Cardiac septum (tissue), 1 donor: ENCODE measurements at regions of chr1 and their contacts with region 1.

Region 1: GRCh38 chr1:29181413-29182225 is at the start of gene SRSF4:
- DNase-seq: peak; percentile 100
- total RNA-seq, gene SRSF4: 54.8 TPM

Region 2: GRCh38 chr1:28642847-28643635 is 538.6 kb before region 1 on chr1 and contains the start of gene TAF12:
- intact Hi-C with region 1: loop called (anchors 5 kb)
- DNase-seq: peak; percentile 95
- total RNA-seq, gene TAF12: 17.3 TPM

Region 3: DNA sequence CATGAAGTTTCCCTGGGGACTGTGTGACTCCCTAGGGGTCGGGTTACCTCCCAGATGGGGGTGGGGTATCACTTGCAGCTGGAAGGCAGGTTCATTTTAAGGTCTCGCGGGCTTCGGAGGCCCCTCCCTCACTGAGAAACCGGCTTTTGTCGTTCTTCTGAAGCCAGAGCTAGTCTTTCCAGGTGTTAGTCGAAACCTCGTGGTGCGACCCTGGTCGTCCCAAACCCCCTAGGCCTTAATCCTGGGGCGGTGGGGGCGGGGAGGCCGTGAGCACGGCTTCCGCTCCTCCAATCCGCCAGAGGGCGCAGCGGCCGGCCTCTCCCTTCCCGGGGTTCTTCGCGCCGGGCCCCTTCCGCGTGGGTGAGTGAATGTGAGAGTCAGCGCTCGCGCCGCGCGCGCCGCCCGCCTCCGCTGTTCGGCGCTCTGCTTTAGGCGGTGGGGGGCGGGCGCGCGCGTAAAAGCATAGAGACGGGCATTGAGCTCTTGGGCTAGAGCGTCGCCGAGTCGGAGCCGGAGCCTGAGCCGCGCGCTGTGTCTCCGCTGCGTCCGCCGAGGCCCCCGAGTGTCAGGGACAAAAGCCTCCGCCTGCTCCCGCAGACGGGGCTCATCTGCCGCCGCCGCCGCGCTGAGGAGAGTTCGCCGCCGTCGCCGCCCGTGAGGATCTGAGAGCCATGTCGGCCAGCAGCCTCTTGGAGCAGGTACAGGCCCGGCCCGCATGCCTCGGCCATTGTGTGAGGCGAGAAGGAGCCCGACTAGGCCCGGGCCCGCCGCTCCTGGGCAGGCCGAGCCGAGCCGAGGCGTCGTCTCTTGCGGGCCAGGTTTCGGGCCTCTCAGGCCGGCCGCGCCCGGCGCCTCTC is 444.9 kb before region 1 on chr1 and contains the start of gene YTHDF2:
- intact Hi-C with region 1: loop called (anchors 5 kb)
- DNase-seq: peak; percentile 98
- total RNA-seq, gene YTHDF2: 44.4 TPM

Region 4: DNA sequence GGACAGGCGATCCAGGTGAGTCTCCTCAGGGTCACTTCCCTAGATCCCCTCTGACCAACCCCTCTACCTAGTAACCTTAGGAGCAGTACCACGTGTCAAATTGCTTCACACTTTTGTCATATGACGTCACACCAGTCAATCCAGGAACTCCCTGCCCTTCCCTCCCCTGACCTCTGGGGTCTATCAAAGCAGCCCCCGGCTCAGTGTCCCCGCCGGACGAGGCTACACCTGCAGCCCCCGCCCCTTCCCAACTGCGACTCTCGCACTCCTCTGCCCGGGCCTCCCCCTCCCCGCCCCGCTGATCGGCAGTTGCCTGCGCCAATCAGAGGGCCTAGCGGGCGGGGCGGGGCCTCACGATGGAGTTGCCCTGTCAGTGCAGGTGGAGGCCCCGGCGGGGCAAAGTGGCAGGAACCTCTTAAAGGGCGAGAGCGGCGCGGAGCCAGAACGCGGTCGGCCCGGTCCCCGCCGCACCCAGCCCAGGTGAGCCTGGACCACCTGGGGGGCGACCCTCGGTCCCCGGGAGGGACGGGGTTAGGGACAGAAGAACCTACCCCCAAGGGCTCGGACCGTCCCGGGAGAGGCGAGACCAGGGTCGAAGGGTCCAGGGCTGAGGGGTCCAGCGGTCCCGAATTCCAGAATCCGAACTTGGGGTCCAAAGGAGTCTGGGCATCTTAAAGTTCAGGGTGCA is 294.7 kb before region 1 on chr1:
- intact Hi-C with region 1: loop called (anchors 5 kb)
- DNase-seq: peak; percentile 95

Region 5: DNA sequence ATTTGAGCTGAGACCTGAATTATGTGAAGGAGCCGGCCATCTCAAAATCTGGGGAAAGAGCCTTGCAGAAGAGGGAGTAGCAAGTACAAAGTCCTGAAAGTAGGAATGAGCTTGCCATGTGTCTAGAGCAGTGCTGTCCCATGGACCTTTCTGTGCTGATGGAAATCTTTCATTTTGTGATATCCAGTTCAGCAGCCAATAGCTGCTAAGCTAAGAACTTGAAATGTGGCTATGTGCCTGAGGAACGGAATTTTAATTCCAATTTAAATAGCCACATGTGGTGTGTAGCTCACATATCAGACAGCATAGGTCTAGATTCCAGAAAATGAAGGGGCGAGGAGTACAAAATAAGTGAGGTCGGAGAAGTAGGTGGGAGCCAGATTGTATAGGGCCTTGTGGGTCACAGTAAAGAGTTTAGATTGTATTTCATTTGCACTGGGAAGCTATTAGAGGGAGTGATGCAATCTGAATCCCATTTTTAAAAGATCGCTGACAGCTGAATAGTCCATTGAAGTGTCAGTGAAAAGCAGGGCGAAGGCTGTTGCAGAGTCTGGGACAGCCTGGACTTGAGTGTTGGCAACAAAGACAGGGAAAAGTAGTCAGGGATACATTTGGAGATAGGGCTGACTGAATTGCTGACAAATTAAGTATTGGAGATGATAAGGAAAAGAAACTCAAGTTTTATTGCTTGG is 138.2 kb before region 1 on chr1:
- intact Hi-C with region 1: loop called (anchors 10 kb)
- DNase-seq: no peak

Region 6: GRCh38 chr1:29124366-29125236 is 57.0 kb before region 1 on chr1:
- intact Hi-C with region 1: loop called (anchors 2 kb)
- DNase-seq: peak; percentile 90

Region 7: GRCh38 chr1:29202584-29203340 is 21.1 kb after region 1 on chr1:
- intact Hi-C with region 1: loop called (anchors 2 kb)
- DNase-seq: peak; percentile 96